ENCODE measurements at regions of chr3 and their contacts with region 1.

Region 1: DNA sequence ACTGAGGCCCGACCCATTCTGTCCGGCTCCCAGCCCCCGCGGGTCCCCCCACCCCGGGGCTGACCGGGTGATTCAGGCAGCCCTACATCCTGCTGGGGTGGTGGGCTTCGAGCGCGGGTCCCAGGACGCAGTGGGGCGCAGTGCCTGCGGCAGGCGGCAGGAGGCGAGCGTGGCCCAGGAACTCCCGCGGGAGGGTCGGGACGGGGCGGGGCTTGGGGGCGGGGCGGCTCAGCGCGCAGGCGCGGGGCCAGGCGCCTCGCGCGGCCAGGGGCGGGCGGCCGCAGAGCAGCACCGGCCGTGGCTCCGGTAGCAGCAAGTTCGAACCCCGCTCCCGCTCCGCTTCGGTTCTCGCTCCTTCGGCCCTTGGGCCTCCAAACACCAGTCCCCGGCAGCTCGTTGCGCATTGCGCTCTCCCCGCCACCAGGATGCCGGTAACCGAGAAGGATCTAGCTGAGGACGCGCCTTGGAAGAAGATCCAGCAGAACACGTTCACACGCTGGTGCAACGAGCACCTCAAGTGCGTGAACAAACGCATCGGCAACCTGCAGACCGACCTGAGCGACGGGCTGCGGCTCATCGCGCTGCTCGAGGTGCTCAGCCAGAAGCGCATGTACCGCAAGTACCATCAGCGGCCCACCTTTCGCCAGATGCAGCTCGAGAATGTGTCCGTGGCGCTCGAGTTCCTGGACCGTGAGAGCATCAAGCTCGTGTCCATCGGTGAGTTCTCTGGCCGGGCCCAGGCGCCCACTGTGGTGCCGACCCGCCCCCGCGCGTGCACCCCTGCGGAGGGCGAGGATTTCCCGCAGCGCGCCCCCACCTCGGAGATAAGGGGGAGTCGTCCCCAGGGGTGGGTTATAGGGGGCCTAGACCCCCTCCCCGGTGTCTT is at the start of gene FLNB:
- DNase-seq: peak in 1 of 2 donors; percentile 82
- ATAC-seq: peak; percentile 60
- total RNA-seq, gene FLNB: 410 to 585 TPM

Region 2: GRCh38 chr3:58177747-58178527 is 169.6 kb after region 1 on chr3:
- intact Hi-C with region 1: loop called in 1 of 2 experiments (anchors 10 kb)
- DNase-seq: peak; percentile 84 to 94
- ATAC-seq: peak; percentile 49